PC-3 (cell line): ENCODE measurements at regions of chr1 and their contacts with region 1.

Region 1: DNA sequence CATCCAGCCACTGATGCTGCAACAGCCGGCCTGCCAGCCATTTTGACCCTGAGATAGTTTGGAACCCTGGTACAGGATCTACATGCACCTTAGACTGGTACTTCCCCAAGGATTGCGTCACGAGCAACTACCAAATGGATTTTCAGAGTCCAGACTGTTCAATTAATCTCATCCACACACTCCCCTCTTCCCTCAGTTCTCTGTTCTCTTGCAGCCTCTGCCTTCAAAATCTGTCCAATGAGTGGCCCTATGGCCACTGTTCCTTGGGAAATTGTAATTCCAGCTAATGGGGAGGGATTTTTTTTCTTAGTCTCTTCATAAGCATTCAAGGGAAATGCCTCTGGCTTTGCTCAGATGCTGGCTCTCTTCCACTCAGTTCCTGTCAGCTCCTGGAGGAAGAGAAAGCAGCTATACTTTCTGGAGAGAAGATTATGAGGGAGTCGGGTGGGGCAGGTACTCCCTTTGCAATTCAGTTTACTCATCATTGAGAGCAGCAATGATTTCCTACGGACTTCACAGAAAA is 19.8 kb upstream of the UAP1 start:
- DNase-seq: peak; percentile 99
- ATAC-seq: peak; percentile 83
- H3K4me3 ChIP-seq: no peak overlapping the region
- H3K27ac ChIP-seq: peak overlapping the region; percentile 61
- H3K4me1 ChIP-seq: peaks cover 44% of the 10 kb centered on the region
- H3K27me3 ChIP-seq: no peaks in the 10 kb centered on the region
- CTCF ChIP-seq: no peak

Region 2: DNA sequence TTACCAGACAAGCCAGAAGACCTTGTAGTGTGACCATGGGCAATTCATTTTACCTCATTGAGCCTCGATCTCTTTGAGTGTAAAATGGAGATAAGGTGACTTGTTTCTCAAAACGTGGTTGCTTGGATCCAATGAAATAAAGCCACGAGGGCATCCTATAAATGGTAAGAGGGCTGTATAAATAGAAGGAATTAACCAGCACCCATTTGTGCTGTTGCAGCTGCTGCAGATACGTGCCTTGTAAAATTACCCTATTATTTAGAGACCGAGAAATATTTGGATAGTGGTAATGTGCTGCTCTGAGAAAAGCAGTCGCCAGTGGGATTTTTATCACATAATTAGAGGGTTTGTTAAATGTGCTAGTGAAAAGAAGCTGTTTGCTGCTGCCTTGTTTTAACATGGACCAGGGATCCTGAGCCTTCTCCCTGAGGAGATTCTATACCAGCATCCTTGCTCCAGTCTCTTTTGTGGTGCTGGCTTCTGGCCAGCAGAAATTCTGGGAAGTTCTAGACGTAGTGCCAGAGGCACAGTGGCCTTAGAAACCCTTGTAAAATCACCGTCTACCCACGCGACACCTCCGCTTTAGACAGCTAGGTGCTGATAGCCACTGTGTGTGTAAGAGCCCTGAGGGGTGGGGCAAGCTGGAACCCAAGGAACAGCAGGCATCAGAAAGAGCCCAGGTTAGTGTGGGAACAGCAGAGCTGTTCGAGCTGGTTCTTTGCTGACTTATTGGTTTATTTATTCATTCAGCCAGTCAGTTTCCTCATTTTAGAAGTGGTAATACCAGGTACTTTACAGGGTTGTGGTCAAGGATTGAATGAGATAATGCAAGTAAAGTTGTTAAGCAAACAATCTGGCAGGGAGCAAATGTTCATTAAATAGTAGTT is 334.7 kb before region 1 on chr1:
- CTCF ChIA-PET with region 1: no interaction called
- POLR2A ChIA-PET with region 1: interaction called, 11 read pairs
- intact Hi-C with region 1: no loop called
- DNase-seq: peak; percentile 83
- ATAC-seq: peak; percentile 88
- H3K4me3 ChIP-seq: no peak overlapping the region
- H3K27ac ChIP-seq: peak overlapping the region; percentile 24
- H3K4me1 ChIP-seq: peaks cover 20% of the 10 kb centered on the region
- H3K27me3 ChIP-seq: no peaks in the 10 kb centered on the region
- CTCF ChIP-seq: no peak

Region 3: GRCh38 chr1:162561037-162561616 is 19.4 kb after region 1 on chr1:
- CTCF ChIA-PET with region 1: no interaction called
- POLR2A ChIA-PET with region 1: interaction called, 3 read pairs
- intact Hi-C with region 1: loop called (anchors 1 kb)
- DNase-seq: peak; percentile 99
- ATAC-seq: peak; percentile 91
- H3K4me3 ChIP-seq: peak overlapping the region; percentile 94
- H3K27ac ChIP-seq: peak overlapping the region; percentile 69
- H3K4me1 ChIP-seq: peaks cover 36% of the 10 kb centered on the region
- H3K27me3 ChIP-seq: no peaks in the 10 kb centered on the region
- CTCF ChIP-seq: no peak

Region 4: DNA sequence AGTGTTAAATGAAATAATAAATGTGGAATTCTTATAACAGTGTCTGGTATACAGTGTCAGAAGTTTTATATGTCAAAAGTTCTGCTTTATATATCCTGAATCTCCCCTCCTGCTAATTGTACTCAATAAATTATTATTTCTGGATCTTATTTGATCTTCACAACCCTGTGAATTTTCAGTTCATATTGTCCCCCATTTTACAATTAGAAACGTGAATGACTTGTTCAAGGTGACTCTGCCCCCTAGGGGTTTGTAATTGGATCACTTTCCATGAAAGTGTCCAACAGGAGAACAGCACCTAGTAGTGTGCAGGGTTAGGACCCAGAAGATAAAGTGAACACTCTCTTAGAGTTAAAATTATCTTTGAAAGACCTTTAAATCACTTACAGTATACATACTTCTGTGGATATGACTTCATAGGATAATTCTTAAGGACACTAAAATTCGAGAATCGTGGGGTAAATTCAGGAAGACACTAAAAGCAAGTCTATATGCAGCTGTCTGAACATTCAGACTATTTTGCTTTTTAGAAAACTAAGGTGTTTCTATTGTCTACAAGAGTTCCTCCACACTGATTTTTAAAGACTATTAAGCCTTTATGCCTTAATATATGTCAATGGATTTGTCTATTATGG is 86.1 kb after region 1 on chr1:
- CTCF ChIA-PET with region 1: no interaction called
- POLR2A ChIA-PET with region 1: interaction called, 11 read pairs
- intact Hi-C with region 1: no loop called
- DNase-seq: peak; percentile 70
- ATAC-seq: peak; percentile 75
- H3K4me3 ChIP-seq: no peak overlapping the region
- H3K27ac ChIP-seq: no peak overlapping the region
- H3K4me1 ChIP-seq: no peaks in the 10 kb centered on the region
- H3K27me3 ChIP-seq: no peaks in the 10 kb centered on the region
- CTCF ChIP-seq: peak; percentile 92

Region 5: GRCh38 chr1:162690672-162691434 is 149.2 kb after region 1 on chr1:
- CTCF ChIA-PET with region 1: no interaction called
- POLR2A ChIA-PET with region 1: no interaction called
- intact Hi-C with region 1: no loop called
- DNase-seq: peak; percentile 98
- ATAC-seq: peak; percentile 91
- H3K4me3 ChIP-seq: peak overlapping the region; percentile 12; the same call in 1 of the 2 replicates
- H3K27ac ChIP-seq: peak overlapping the region; percentile 78
- H3K4me1 ChIP-seq: peaks cover 28% of the 10 kb centered on the region
- H3K27me3 ChIP-seq: no peaks in the 10 kb centered on the region
- CTCF ChIP-seq: no peak